A673 (cell line): ENCODE measurements at regions of chr13 and their contacts with region 1.

Region 1: DNA sequence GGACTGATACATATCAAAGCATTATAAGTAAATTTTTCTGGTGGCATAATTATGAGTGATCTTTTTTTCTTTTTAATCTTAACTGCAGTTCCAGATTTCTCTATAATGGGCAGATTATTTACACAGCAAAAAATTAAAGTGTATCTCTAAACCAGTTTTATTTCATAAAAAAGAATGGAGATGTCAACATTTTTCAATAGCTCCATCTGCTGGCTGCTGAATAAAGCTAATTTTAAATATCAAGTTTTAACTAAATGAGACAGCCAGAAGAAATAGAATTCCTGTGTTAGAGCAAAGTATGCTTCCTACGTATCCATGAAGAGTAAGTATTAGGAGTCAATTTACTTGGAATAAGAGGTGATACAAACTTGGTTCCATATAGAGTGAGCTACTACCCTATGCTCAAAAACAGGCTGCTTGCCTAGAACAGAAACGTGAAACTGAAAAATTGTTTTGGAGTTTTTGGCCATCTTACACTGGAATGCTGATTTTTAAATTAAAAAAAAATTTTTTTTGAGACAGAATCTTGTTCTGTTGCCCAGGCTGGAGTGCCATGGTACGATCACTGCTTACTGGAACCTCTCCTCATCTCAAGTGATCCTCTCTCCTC is 5.0 kb upstream of the PDS5B start:
- DNase-seq: peak; percentile 54
- H3K4me3 ChIP-seq: no peak overlapping the region
- H3K27ac ChIP-seq: no peak overlapping the region
- H3K4me1 ChIP-seq: no peaks in the 10 kb centered on the region
- H3K27me3 ChIP-seq: no peaks in the 10 kb centered on the region
- CTCF ChIP-seq: peak; percentile 70

Region 2: DNA sequence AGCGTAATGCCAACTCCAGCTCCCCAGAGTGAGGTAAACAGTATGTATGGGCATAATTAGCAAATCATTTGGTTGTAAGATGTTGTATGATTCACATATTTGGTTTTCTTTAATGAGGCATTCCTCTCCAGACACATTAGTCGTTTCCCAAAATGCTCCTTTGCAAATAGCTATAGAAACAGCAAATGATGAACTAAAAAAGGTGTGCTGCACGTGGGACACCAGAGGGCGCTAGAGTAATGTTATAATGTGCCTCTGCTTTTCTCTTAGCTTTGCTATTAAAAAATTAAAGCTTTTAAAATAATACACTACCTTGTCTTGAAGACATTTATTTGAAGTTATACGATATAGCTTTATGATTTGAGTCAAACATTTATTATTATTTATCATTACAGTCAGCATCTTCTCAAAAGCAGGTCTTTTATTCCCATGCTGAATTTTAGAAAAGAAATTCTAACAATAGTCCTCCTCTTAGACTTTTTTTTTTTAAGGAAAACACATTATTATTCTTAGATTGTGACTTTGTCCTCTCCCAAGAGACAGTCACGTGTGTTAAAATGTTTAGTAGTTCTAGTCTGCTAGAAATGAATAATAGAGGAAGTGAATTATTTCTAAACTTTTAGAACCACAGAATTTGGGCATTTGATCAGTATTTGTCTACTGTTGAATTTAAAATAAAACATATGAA is 671.3 kb before region 1 on chr13:
- CTCF ChIA-PET with region 1: interaction called, 4 read pairs
- POLR2A ChIA-PET with region 1: no interaction called
- intact Hi-C with region 1: loop called (anchors 5 kb)
- DNase-seq: peak; percentile 65
- H3K4me3 ChIP-seq: no peak overlapping the region
- H3K27ac ChIP-seq: no peak overlapping the region
- H3K4me1 ChIP-seq: no peaks in the 10 kb centered on the region
- H3K27me3 ChIP-seq: no peaks in the 10 kb centered on the region
- CTCF ChIP-seq: peak; percentile 93

Region 3: DNA sequence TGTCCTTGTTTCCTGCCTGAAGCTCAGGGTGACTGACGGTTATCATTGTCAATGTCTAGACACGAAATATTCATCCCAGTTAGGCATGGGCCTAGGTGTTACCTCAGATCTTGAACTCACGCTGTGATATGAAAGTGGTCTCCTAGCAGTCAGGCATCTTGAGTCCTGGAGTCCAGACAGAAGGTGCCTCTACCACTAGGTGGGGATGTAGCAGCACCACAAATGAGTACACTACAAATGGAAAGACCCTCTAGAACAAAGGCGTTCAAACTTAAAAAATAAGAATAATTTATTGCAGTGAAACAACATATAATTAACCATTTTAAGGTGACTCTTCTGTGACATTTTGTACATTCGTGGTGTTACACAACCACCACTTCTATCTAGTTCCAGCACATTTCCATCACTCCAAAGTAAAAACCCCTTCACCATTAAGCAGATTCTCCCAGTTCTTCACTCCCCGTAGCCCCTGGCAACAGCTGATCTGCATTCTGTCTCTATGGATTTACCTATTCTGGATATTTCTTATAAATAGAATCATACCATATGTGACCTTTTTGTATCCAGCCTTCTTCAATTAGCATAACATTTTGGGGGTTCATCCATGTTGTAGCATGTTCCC is 561.6 kb before region 1 on chr13:
- CTCF ChIA-PET with region 1: no interaction called
- POLR2A ChIA-PET with region 1: no interaction called
- intact Hi-C with region 1: loop called (anchors 2 kb)
- DNase-seq: peak; percentile 59
- H3K4me3 ChIP-seq: no peak overlapping the region
- H3K27ac ChIP-seq: no peak overlapping the region
- H3K4me1 ChIP-seq: no peaks in the 10 kb centered on the region
- H3K27me3 ChIP-seq: no peaks in the 10 kb centered on the region
- CTCF ChIP-seq: peak; percentile 78

Region 4: DNA sequence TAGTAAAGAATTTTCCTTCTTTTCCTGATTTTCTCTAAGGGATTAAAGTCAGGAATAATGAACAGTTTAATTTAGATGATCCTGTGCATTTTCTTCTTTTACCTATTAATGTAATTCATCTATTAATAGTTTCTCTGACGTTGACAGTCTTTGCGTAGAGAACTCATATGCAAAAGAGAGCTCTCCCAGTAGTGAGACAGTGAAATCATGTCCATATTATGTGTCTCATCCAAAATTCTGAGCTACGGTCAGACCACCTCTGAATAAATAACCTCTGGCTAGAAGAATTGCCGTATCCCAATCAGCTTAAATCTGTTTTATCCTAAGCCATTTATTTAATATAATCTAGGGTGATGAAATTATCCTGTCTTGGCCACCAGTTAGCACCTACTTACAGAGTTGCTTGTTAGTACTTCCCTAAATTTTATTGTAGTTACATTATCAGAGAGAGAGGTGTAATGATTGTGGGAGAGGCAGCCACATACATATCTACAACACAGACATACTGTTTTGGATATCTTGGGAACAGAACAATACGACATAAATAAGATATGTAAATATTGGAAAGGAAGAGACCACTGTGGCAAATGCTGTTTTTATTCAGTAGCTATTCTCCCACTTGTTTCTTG is 35.7 kb after region 1 on chr13:
- CTCF ChIA-PET with region 1: no interaction called
- POLR2A ChIA-PET with region 1: no interaction called
- intact Hi-C with region 1: no loop called
- DNase-seq: no peak
- H3K4me3 ChIP-seq: no peak overlapping the region
- H3K27ac ChIP-seq: no peak overlapping the region
- H3K4me1 ChIP-seq: no peaks in the 10 kb centered on the region
- H3K27me3 ChIP-seq: no peaks in the 10 kb centered on the region
- CTCF ChIP-seq: no peak

Region 5: DNA sequence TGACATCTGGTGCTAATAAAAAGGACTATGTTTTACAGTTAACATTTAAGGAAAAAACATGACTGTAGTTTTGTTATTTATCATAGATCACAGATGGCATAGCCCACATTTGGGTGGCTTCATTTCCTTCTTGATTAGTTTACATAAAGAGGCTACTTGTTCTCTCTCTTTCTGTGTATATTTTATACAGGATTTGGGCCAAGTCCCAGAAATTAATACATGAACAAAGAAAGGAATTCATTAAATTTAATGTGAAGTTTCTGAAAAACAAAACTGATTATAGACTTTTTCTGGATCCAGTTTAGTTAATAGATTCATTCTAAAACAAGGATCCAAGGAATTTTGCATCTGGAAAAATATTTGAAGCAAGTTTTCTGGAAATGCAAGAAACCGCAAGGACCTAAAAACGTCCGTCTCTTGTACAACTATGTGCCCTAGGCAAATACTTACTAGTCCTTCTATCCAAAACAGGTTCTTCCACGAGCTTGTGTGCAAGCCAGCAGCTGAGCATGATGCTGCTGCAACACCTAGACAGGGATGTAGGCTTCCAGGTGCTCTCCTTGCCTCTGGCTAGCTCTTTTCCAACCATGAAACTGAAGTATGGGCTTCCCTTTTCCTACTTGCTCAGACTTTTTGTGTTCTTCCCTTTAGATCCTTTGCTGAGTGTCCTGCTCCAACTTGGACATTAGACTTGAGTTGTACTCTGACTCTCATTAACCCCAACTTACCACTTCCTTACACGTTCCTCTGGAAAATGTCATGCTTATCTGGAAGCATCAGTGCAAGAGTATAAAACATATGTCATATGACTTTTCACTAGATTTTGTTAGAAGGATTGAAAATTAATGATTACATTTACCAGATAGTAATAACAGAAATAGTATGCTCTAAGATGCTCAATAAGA is 865.8 kb after region 1 on chr13:
- CTCF ChIA-PET with region 1: no interaction called
- POLR2A ChIA-PET with region 1: no interaction called
- intact Hi-C with region 1: loop called (anchors 5 kb)
- DNase-seq: peak; percentile 34
- H3K4me3 ChIP-seq: no peak overlapping the region
- H3K27ac ChIP-seq: peak overlapping the region; percentile 47
- H3K4me1 ChIP-seq: peaks cover 22% of the 10 kb centered on the region
- H3K27me3 ChIP-seq: no peaks in the 10 kb centered on the region
- CTCF ChIP-seq: no peak